MCF 10A (cell line): ENCODE measurements at regions of chr9 and their contacts with region 1.

Region 1: GRCh38 chr9:96654443-96655197 is 497 bp downstream of the PRXL2C start:
- DNase-seq: peak; percentile 69
- H3K4me3 Mint-ChIP-seq: peak overlapping the region; percentile 79
- H3K27ac Mint-ChIP-seq: peak overlapping the region; percentile 91
- H3K4me1 Mint-ChIP-seq: peaks cover 13% of the 10 kb centered on the region
- H3K27me3 Mint-ChIP-seq: no peaks in the 10 kb centered on the region
- CTCF ChIP-seq: no peak

Region 2: DNA sequence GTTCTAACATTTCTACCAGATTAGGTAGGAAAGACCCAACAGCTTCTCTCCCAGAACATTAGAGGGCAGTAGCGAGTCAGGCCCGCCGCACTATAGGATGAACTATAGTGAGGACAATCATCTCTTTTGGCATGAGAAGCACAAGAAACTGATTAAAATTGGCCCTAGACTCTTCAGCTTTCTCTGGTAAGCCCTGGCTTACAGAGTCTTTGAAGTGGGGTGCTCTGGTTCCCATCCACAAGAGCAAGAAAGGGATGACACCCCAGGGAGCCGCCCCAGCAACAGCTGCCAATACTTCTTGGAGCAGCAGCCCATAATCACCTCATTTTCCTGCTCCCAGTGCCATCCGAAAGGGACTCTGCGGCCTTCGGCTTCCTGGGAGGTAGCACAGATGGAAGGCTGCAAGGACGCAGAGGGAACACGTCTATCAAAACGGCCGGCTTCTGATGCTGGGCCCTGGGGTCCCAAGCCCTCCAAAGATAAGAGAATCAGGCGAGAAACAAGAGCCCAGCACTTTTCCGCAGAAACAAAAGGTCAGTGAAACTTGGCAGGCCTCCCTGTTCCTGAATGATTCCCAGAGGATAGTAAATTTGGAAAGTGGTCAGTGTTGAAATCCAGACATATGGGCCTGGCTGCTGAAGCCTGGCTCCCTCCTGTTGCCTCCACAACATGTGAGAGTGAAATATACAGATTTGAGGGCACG is 421.9 kb before region 1 on chr9:
- CTCF ChIA-PET with region 1: no interaction called
- POLR2A ChIA-PET with region 1: no interaction called
- intact Hi-C with region 1: loop called (anchors 5 kb)
- DNase-seq: peak; percentile 79
- H3K4me3 Mint-ChIP-seq: no peak overlapping the region
- H3K27ac Mint-ChIP-seq: no peak overlapping the region
- H3K4me1 Mint-ChIP-seq: peaks cover 6% of the 10 kb centered on the region
- H3K27me3 Mint-ChIP-seq: peaks cover 59% of the 10 kb centered on the region
- CTCF ChIP-seq: peak; percentile 84

Region 3: GRCh38 chr9:96327694-96328352 is 326.8 kb before region 1 on chr9:
- CTCF ChIA-PET with region 1: interaction called, 4 read pairs
- POLR2A ChIA-PET with region 1: interaction called, 5 read pairs
- intact Hi-C with region 1: loop called (anchors 1 kb)
- DNase-seq: peak; percentile 78
- H3K4me3 Mint-ChIP-seq: no peak overlapping the region
- H3K27ac Mint-ChIP-seq: no peak overlapping the region
- H3K4me1 Mint-ChIP-seq: peaks cover 7% of the 10 kb centered on the region
- H3K27me3 Mint-ChIP-seq: no peaks in the 10 kb centered on the region
- CTCF ChIP-seq: peak; percentile 83

Region 4: GRCh38 chr9:96418074-96418809 is 236.4 kb before region 1 on chr9 and contains the start of gene ZNF367:
- CTCF ChIA-PET with region 1: interaction called, 3 read pairs
- POLR2A ChIA-PET with region 1: interaction called, 3 read pairs
- intact Hi-C with region 1: loop called (anchors 1 kb)
- DNase-seq: peak; percentile 97
- H3K4me3 Mint-ChIP-seq: peak within 1 kb of the TSS; percentile 93
- H3K27ac Mint-ChIP-seq: peak within 1 kb of the TSS; percentile 63
- H3K4me1 Mint-ChIP-seq: peaks cover 22% of the 10 kb centered on the region
- H3K27me3 Mint-ChIP-seq: no peaks in the 10 kb centered on the region
- CTCF ChIP-seq: no peak
- total RNA-seq, gene ZNF367: 1.5 and 2.7 TPM in 2 replicates

Region 5: GRCh38 chr9:96566498-96567207 is 88.0 kb before region 1 on chr9:
- CTCF ChIA-PET with region 1: interaction called, 3 read pairs
- POLR2A ChIA-PET with region 1: interaction called, 10 read pairs
- intact Hi-C with region 1: no loop called
- DNase-seq: peak; percentile 63
- H3K4me3 Mint-ChIP-seq: peak overlapping the region; percentile 80
- H3K27ac Mint-ChIP-seq: peak overlapping the region; percentile 84
- H3K4me1 Mint-ChIP-seq: peaks cover 6% of the 10 kb centered on the region
- H3K27me3 Mint-ChIP-seq: no peaks in the 10 kb centered on the region
- CTCF ChIP-seq: peak; percentile 49

Region 6: GRCh38 chr9:96667361-96667728 is 12.7 kb after region 1 on chr9:
- CTCF ChIA-PET with region 1: interaction called, 16 read pairs
- POLR2A ChIA-PET with region 1: interaction called, 10 read pairs
- intact Hi-C with region 1: no loop called
- DNase-seq: no peak
- H3K4me3 Mint-ChIP-seq: no peak overlapping the region
- H3K27ac Mint-ChIP-seq: no peak overlapping the region
- H3K4me1 Mint-ChIP-seq: no peaks in the 10 kb centered on the region
- H3K27me3 Mint-ChIP-seq: no peaks in the 10 kb centered on the region
- CTCF ChIP-seq: no peak

Region 7: GRCh38 chr9:97348866-97349265 is 694.2 kb after region 1 on chr9:
- CTCF ChIA-PET with region 1: no interaction called
- POLR2A ChIA-PET with region 1: no interaction called
- intact Hi-C with region 1: no loop called
- DNase-seq: no peak
- H3K4me3 Mint-ChIP-seq: no peak overlapping the region
- H3K27ac Mint-ChIP-seq: no peak overlapping the region
- H3K4me1 Mint-ChIP-seq: no peaks in the 10 kb centered on the region
- H3K27me3 Mint-ChIP-seq: no peaks in the 10 kb centered on the region
- CTCF ChIP-seq: no peak